ENCODE measurements at regions of chr2 and their contacts with region 1.

Region 1: DNA sequence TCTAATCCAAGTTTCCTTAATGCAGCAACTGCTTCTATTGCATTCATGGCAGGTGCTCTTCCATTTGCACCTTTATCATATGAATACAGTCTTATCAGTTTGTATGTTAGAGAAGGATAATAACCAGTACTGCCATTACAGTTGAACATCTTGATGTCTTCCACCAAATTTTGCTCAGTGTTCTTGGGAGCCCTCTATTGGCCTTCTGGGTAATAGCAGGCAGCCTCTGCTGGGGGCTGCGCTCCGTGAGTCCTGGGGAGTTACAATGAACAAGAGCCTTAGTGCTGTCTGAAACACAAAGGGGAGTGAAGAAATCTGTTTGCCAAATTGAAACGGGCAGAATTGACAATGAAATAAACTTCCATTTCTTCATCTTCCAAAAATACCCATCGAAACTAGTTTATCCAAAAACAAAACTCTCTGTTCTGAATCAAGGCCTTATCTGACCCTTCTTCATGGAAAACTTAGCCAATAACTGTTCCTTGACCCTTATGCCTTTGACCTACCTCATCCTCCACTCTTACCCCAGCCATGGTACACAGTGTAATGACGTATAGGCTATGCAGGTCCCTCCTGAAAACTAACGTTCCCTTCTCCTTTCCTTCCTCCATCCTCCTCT is 79.9 kb downstream of the ALK start:
- DNase-seq: no peak
- ATAC-seq: peak; percentile 26

Region 2: GRCh38 chr2:28958689-28959088 is 882.8 kb before region 1 on chr2:
- intact Hi-C with region 1: loop called (anchors 5 kb)
- DNase-seq: no peak
- ATAC-seq: peak; percentile 93

Region 3: DNA sequence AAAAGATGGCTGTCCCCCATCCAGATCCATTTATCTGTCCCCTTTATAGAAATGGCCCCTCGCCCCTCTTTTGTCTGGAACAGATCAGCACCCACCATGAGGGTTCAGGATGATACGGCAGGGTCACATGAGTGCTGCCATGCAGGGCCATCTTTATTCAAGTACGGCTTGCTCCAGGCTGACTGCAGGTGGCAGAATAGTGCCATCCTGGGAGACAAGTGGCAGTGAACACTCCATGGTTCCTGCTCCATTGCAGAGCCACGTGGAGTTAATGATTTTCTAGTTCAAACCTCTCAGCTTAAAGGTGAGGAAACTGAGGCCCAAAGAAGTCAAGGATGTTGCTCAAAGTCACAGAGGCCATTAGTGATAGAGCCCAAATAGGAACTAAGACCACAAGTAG is 545.6 kb before region 1 on chr2:
- intact Hi-C with region 1: loop called (anchors 5 kb)
- DNase-seq: no peak
- ATAC-seq: no peak

Region 4: DNA sequence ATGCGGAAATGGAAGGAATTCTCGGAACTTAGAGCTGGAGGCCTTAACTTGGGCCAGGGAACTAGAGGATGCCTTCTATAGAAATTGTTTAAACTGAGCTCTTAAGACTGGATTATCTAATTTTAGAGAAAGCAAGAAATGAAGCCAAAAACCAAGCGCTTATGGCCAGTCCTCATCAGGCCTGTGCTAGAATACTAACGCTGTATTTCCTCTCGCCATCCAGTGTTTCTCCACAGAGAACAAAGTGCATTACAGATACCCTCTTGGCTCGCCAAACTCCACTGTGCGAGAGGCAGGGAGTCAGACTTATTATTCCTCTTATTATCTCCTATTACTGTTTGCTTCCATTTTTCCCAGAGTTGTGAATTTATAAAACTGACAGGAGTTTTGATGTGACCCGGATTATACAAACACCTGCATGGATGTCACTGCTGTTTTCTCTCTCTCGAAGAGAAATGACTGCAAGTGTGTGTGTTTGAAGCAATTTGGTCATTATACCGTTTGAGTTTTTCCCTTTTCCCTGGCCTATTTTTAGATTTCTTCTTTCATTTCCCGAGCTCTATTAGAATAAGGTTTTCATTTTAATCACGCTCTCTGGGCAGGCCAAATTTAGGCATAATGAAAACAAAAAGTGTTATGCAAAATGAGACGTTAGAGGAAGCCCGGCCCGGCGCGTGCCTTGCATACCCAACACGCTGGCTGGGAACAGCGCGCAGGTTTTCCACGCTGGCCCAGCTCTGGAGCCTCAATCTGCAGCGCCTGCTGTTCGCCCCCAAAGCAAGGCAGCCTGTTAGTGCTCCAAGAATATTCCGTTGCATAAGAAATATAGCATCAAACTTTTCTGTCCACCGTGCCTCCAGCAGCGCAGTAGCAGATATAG is 23.5 kb before region 1 on chr2:
- intact Hi-C with region 1: no loop called
- DNase-seq: no peak
- ATAC-seq: no peak